ENCODE measurements at regions of chr5 and their contacts with region 1.

Region 1: GRCh38 chr5:50962934-50963872 is 296.8 kb downstream of the PARP8 start:
- DNase-seq: peak in 31 of 35 experiments; percentile 10 to 72 (median 37)
- ATAC-seq: peak; percentile 62 to 75 (median 70)
- H3K4me3 ChIP-seq: peak overlapping the region; percentile 32 to 85
- H3K4me3 Mint-ChIP-seq: peak overlapping the region; percentile 72 to 84 (median 74)
- H3K27ac ChIP-seq: no peak overlapping the region
- H3K27ac Mint-ChIP-seq: no peak overlapping the region
- H3K4me1 ChIP-seq: peaks cover 9 to 41% of the 10 kb centered on the region in 2 experiments
- H3K4me1 Mint-ChIP-seq: peaks cover 42 to 44% (median 44%) of the 10 kb centered on the region in 3 donors
- H3K27me3 ChIP-seq: peaks cover 19 to 49% of the 10 kb centered on the region in 2 experiments
- H3K27me3 Mint-ChIP-seq: peaks cover 59 to 70% of the 10 kb centered on the region in 2 donors

Region 2: DNA sequence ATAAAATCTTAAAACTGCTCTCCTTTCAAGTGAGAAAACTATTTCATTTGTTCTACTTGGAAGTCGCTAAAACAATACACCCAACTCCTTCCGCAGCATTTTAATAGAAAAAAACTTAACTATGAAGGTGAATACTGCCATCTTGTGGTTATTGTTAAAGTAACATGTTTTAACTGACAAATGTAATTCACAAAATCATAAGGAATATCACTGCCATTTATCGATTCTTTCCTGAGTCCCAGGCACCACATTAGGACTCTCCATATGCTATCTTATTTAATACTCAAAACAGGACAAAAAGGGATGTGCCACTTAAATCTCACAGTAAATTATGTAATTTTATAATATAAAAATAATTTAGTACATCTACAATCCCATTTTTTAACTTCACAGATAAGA is 1694.0 kb after region 1 on chr5:
- CTCF ChIA-PET with region 1: interaction called, 11 to 19 read pairs
- POLR2A ChIA-PET with region 1: no interaction called
- DNase-seq: peak in 1 of 35 experiments; percentile 64
- ATAC-seq: no peak
- H3K4me3 ChIP-seq: no peak overlapping the region
- H3K4me3 Mint-ChIP-seq: no peak overlapping the region
- H3K27ac ChIP-seq: no peak overlapping the region
- H3K27ac Mint-ChIP-seq: no peak overlapping the region
- H3K4me1 ChIP-seq: peaks cover 0 to 4% of the 10 kb centered on the region in 2 experiments
- H3K4me1 Mint-ChIP-seq: no peaks in the 10 kb centered on the region
- H3K27me3 ChIP-seq: no peaks in the 10 kb centered on the region
- H3K27me3 Mint-ChIP-seq: peaks cover 11 to 15% of the 10 kb centered on the region in 2 donors

Measured in T-cell (primary cell).